Gastrocnemius medialis (tissue), 4 donors: ENCODE measurements at regions of chr14 and their contacts with region 1.

Region 1: GRCh38 chr14:91089958-91090535 is 23.8 kb upstream of the DGLUCY start:
- DNase-seq: no peak
- ATAC-seq: no peak
- H3K4me3 ChIP-seq: no peak overlapping the region
- H3K27ac ChIP-seq: no peak overlapping the region
- H3K4me1 ChIP-seq: peaks cover 9 to 19% of the 10 kb centered on the region in 2 donors
- H3K27me3 ChIP-seq: no peaks in the 10 kb centered on the region
- CTCF ChIP-seq: no peak
- POLR2A ChIP-seq: no peak

Region 2: DNA sequence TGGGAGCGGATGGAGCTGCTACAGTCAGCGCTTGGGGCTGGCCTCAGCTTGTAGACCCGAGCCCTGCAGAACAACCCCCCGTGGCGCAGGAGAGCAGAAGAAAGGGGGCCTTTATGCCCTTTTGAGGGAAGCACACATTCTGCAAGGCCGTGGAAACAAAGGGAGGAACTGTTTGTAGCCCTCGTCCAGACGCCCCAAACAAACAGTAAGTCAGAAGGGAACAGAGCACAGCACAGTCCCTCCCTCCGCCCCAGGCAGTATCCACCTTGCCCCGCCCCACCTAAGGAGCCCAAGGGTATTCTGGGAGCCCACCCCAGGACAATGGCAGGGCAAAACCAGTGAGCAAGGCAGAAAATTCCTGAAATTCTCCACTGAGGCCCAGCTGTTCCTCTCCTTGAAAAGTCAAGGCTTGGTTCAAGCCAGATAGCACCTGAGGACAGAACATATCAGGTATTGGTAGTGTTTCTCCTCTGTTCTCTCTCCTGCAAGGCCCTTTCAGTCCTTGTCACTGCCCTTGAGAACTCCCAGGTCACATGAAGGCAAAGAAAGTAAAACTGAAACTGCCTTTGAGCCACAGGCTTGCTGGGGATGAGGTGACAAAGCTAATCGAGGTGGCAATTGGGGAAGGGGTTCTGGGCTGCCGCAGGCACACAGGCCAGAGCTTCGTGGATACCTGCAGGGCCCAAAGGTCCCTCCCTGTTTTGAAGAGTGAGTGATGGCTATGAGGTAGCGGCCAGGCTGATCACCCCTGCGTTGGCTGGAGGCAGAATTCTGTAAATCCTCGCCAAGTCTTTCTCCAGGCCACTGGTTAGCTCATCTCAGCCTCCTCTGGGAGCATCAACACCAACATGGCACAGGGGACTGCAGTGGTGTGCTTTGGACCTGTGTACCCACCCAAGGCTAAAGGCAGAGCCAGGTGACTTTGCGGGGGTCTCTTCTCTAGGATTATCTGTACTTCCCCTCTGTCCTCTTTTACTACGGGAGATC is 24.3 kb after region 1 on chr14:
- in situ Hi-C with region 1: no loop called
- intact Hi-C with region 1: loop called (anchors 2 kb)
- DNase-seq: peak; percentile 46 to 69
- ATAC-seq: peak; percentile 88 to 90
- H3K4me3 ChIP-seq: peak overlapping the region; percentile 72 to 92 (median 82)
- H3K27ac ChIP-seq: peak overlapping the region; percentile 97 to 100 (median 100)
- H3K4me1 ChIP-seq: peaks cover 42 to 45% of the 10 kb centered on the region in 2 donors
- H3K27me3 ChIP-seq: no peaks in the 10 kb centered on the region
- CTCF ChIP-seq: no peak
- POLR2A ChIP-seq: peak; percentile 90 to 91

Region 3: GRCh38 chr14:91149479-91149921 is 59.5 kb after region 1 on chr14:
- in situ Hi-C with region 1: no loop called
- intact Hi-C with region 1: loop called (anchors 5 kb)
- DNase-seq: peak; percentile 86 to 87
- ATAC-seq: peak; percentile 99 to 100
- H3K4me3 ChIP-seq: no peak overlapping the region
- H3K27ac ChIP-seq: peak overlapping the region; percentile 78 to 94 (median 84)
- H3K4me1 ChIP-seq: peaks cover 13 to 28% of the 10 kb centered on the region in 2 donors
- H3K27me3 ChIP-seq: no peaks in the 10 kb centered on the region
- CTCF ChIP-seq: no peak
- POLR2A ChIP-seq: no peak

Region 4: DNA sequence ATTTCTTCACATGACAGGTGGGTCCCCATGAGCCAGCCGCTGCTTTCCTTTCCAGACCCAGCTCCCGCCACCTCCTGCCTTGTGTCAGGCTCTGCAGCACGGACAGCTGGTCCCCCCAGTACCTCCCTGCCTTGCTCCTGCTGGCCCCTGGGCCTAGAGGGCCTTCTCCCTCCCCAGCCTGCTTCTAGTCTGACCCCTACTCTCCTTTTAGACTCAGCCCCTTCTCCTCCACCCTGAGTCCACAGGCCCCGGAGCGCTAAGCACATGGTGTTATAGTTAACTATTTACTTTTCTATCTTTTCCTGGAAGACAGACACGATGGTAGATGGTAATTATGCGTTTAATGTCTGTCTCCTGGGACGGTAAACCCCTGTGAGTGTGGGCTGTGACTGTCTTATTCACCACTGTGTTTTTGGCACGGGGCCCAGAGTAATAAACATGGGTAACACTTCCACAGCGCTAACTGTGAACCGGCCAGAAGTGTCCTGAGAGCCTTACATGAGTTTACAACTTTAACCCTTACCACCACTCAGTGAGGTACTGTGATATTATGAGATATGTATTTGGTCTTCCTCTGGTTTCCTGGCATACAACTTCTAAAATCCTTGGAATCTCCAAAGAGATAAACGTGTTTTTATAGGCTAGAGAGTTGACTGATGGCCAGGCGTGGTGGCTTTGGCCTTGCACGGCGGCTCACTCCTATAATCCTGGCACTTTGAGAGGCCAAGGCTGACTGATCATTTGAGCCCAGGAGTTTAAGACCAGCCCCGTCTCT is 65.0 kb after region 1 on chr14:
- in situ Hi-C with region 1: no loop called
- intact Hi-C with region 1: loop called (anchors 2 kb)
- DNase-seq: peak; percentile 30 to 62
- ATAC-seq: peak; percentile 11 to 17
- H3K4me3 ChIP-seq: no peak overlapping the region
- H3K27ac ChIP-seq: peak overlapping the region; percentile 76 to 94 (median 80)
- H3K4me1 ChIP-seq: peaks cover 45 to 51% of the 10 kb centered on the region in 2 donors
- H3K27me3 ChIP-seq: no peaks in the 10 kb centered on the region
- CTCF ChIP-seq: no peak
- POLR2A ChIP-seq: no peak

Region 5: DNA sequence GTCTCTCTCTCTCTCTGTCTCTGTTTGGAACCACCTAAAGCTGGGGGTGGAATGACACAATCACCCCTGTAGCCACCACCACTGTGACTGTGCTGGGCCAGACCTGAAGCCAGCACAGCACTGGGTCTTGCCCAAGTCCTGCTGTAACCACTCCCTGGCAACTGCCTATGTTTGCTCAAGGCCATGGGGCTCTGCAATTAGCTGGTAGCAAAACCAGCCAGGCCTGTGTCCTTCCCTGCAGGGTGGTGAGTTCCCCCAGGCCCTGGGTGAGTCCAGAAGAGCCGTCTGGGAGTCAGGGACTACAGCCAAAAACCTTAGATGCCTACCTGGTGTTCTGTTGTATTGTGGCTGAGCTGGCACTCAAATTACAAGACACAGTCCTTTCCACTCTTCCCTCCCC is 74.6 kb after region 1 on chr14:
- in situ Hi-C with region 1: no loop called
- intact Hi-C with region 1: loop called (anchors 2 kb)
- DNase-seq: peak; percentile 82 to 93
- ATAC-seq: peak; percentile 23 to 27
- H3K4me3 ChIP-seq: no peak overlapping the region
- H3K27ac ChIP-seq: peak overlapping the region; percentile 90 to 96 (median 94)
- H3K4me1 ChIP-seq: peaks cover 58 to 82% of the 10 kb centered on the region in 2 donors
- H3K27me3 ChIP-seq: no peaks in the 10 kb centered on the region
- CTCF ChIP-seq: no peak
- POLR2A ChIP-seq: no peak

Region 6: GRCh38 chr14:91311284-91311662 is 221.2 kb after region 1 on chr14:
- in situ Hi-C with region 1: no loop called
- intact Hi-C with region 1: no loop called
- DNase-seq: no peak
- ATAC-seq: no peak
- H3K4me3 ChIP-seq: no peak overlapping the region
- H3K27ac ChIP-seq: no peak overlapping the region
- H3K4me1 ChIP-seq: no peaks in the 10 kb centered on the region
- H3K27me3 ChIP-seq: no peaks in the 10 kb centered on the region
- CTCF ChIP-seq: no peak
- POLR2A ChIP-seq: no peak